Common myeloid progenitor, CD34-positive (primary cell): ENCODE measurements at regions of chr17 and their contacts with region 1.

Region 1: GRCh38 chr17:81808778-81809555 is 5.0 kb downstream of the GCGR start:
- DNase-seq: peak in 1 of 3 donors; percentile 14
- H3K4me3 ChIP-seq: no peak overlapping the region
- H3K27ac ChIP-seq: no peak overlapping the region
- H3K4me1 ChIP-seq: peaks cover 0 to 8% (median 4%) of the 10 kb centered on the region in 4 experiments
- H3K27me3 ChIP-seq: peaks cover 0 to 66% (median 15%) of the 10 kb centered on the region in 5 experiments

Region 2: DNA sequence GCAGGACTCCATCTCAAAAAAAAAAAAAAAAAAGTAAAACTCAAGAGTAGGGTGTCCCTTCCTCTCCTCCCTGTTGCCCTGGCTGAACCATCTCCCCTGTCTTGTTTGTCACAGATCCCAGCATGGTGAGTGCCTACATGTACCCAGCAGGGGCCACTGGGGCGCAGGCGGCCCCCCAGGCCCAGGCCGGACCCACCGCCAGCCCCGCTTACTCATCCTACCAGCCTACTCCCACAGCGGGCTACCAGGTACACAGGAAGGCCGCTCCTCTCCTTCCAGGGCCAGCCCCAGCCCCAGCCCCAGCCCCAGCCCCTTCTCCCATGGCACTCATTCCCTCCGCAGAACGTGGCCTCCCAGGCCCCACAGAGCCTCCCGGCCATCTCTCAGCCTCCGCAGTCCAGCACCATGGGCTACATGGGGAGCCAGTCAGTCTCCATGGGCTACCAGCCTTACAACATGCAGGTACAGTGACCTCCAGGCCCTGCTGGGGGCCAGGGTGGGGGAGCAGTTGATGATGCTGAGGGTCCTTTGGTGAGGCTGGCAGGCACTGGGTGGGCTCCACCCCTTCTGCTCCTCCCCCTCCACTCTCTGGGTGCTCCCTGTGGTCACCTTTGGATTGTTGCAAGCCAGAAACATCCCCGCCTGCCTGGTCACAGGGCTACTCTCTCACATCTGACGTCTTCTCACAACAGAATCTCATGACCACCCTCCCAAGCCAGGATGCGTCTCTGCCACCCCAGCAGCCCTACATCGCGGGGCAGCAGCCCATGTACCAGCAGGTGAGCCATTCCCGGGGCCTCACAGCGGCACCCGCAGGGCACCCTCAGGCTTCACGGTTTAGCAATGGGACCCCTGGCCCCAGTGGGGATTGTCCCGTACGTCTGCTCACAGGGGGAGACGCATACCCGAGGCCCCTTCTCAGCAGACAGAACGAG is 108.3 kb before region 1 on chr17:
- CTCF ChIA-PET with region 1: no interaction called
- POLR2A ChIA-PET with region 1: no interaction called
- DNase-seq: no peak
- H3K4me3 ChIP-seq: no peak overlapping the region
- H3K27ac ChIP-seq: peak overlapping the region in 1 of 2 experiments; percentile 34
- H3K4me1 ChIP-seq: peaks cover 0 to 33% (median 30%) of the 10 kb centered on the region in 4 experiments
- H3K27me3 ChIP-seq: no peaks in the 10 kb centered on the region

Region 3: DNA sequence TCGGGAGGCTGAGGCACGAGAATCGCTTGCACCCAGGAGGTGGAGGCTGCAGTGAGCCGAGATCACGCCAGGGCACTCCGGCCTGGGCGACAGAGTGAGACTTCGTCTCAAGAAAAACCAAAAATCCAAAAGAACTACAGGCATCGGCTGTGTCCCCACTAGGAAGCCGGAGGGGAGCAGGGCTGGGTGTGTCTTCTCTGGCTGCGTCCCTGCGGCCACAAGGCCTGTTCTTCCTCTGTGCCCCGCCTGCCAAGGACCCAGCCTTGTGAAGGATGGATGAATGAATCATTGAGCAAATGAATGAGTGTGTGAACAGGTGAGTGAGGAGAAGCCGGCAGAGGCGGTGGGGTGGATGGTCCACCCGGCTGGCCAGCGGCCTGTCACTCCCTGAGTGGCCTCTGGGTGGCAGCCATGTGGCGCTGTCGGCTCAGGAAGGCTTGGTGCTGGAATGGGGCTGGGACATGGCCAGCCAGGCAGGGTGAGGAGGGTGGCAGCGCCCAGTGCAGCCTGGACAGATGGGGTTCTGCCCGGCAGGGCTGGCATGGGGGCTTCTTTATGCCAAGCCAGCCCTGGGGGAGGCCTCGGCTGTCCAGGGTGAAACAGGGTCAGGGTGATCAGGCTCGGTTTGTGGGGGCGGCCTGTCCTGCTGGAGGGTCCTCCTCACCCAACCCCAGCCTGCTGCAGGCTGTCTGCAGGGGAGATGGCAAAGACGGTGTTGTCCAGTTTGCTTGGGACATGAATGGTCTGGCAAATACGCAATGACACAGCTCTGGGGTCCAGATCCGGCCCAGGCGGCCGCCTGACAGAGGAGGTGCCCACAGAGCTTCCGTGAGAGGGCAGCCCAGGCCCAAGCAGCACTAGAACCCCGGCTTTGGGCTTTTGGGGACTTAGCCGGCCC is 75.2 kb before region 1 on chr17:
- CTCF ChIA-PET with region 1: interaction called, 10 read pairs
- POLR2A ChIA-PET with region 1: interaction called, 3 read pairs
- DNase-seq: peak in 2 of 3 donors; percentile 54 to 62
- H3K4me3 ChIP-seq: no peak overlapping the region
- H3K27ac ChIP-seq: no peak overlapping the region
- H3K4me1 ChIP-seq: peaks cover 0 to 32% (median 18%) of the 10 kb centered on the region in 4 experiments
- H3K27me3 ChIP-seq: peaks cover 0 to 17% (median 2%) of the 10 kb centered on the region in 5 experiments